ENCODE measurements at regions of chr13 and their contacts with region 1.

Region 1: GRCh38 chr13:44786756-44787155 is 202.5 kb downstream of the NUFIP1 start:
- DNase-seq: no peak
- ATAC-seq: no peak
- H3K4me3 ChIP-seq: no peak overlapping the region
- H3K27ac ChIP-seq: no peak overlapping the region
- H3K4me1 ChIP-seq: no peaks in the 10 kb centered on the region
- H3K27me3 ChIP-seq: no peaks in the 10 kb centered on the region
- CTCF ChIP-seq: no peak

Region 2: DNA sequence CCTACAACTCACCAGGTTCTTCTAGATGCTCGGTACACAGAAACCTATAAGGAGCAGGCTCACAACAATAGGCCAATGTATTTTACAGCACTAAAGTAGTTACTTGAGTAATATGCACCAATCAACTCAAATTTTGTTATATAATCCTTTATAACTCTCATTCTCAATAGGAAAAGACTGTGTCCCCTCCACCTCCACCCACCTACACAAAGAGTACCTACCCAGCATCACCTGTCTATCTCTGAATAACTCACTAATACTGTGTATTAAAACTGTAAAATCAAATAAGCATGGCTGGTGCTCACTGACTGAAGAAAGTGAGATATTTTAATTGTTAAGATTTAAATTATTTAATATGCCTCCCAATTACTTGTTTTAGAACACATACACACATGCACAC is 1146.3 kb before region 1 on chr13:
- intact Hi-C with region 1: no loop called
- DNase-seq: no peak
- ATAC-seq: no peak
- H3K4me3 ChIP-seq: no peak overlapping the region
- H3K27ac ChIP-seq: no peak overlapping the region
- H3K4me1 ChIP-seq: no peaks in the 10 kb centered on the region
- H3K27me3 ChIP-seq: no peaks in the 10 kb centered on the region
- CTCF ChIP-seq: no peak

Region 3: GRCh38 chr13:44755872-44756271 is 30.9 kb before region 1 on chr13:
- intact Hi-C with region 1: no loop called
- DNase-seq: no peak
- ATAC-seq: no peak
- H3K4me3 ChIP-seq: no peak overlapping the region
- H3K27ac ChIP-seq: peak overlapping the region; percentile 97
- H3K4me1 ChIP-seq: peaks cover 19% of the 10 kb centered on the region
- H3K27me3 ChIP-seq: no peaks in the 10 kb centered on the region
- CTCF ChIP-seq: no peak

Region 4: DNA sequence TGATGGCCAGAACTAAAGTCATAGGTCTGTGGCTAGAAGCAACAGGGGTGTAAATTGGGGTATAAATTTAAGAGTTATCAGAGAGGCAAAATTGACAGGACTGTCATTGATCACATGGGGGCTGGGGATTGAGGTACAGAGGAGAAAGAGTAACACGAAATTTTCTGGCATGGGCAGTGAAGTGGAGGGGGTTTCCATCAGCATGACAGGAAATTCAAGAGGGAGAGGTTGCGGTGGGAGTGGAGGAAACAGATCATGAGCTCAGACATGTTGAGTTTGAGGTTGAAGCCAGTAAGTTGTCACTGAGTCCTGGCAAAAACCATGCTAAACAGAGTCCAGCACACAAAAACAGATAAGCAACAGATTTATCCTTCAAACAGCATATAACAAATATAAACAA is 18.5 kb before region 1 on chr13:
- intact Hi-C with region 1: loop called in 1 of 2 experiments (anchors 1 kb)
- DNase-seq: no peak
- ATAC-seq: no peak
- H3K4me3 ChIP-seq: no peak overlapping the region
- H3K27ac ChIP-seq: no peak overlapping the region
- H3K4me1 ChIP-seq: no peaks in the 10 kb centered on the region
- H3K27me3 ChIP-seq: no peaks in the 10 kb centered on the region
- CTCF ChIP-seq: no peak